Right cardiac atrium (tissue), 5 donors: ENCODE measurements at regions of chr3 and their contacts with region 1.

Region 1: GRCh38 chr3:150787741-150788370 is 24.9 kb upstream of the SIAH2 start:
- DNase-seq: peak; percentile 87 to 95 (median 93)
- ATAC-seq: peak; percentile 88 to 90
- H3K4me3 ChIP-seq: no peak overlapping the region
- H3K27ac ChIP-seq: no peak overlapping the region
- H3K4me1 ChIP-seq: no peaks in the 10 kb centered on the region
- H3K27me3 ChIP-seq: no peaks in the 10 kb centered on the region

Region 2: DNA sequence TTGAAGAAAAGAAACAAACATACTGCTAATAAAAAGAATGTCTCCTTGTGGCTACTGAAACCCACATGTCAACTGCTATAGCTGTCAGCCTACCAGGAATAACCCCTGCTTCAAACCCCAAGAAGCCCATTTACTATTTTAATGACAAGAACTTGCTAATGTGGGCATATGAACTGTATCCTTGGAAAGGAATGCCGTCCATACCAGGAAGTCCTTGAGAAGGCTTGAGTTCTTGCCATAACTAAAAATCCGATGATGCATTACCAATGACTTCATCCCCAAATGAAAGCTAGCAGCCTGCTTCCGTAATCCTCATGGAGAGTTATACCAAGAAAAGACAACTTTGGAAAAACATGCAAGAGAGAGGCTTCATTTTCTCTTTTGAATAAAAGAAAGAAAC is 82.5 kb after region 1 on chr3:
- intact Hi-C with region 1: loop called in 3 of 4 experiments (anchors 10 kb)
- DNase-seq: no peak
- ATAC-seq: no peak
- H3K4me3 ChIP-seq: no peak overlapping the region
- H3K27ac ChIP-seq: no peak overlapping the region
- H3K4me1 ChIP-seq: no peaks in the 10 kb centered on the region
- H3K27me3 ChIP-seq: no peaks in the 10 kb centered on the region

Region 3: GRCh38 chr3:151146071-151146730 is 358.3 kb after region 1 on chr3:
- intact Hi-C with region 1: loop called (anchors 5 to 10 kb)
- DNase-seq: peak; percentile 66 to 79 (median 67)
- ATAC-seq: peak; percentile 92 to 96
- H3K4me3 ChIP-seq: no peak overlapping the region
- H3K27ac ChIP-seq: no peak overlapping the region
- H3K4me1 ChIP-seq: peaks cover 2% of the 10 kb centered on the region
- H3K27me3 ChIP-seq: no peaks in the 10 kb centered on the region